Activated CD8-positive, alpha-beta T cell treated with anti-CD3 and anti-CD28 coated beads, Interleukin-2, amount 10 ng/mL, durations not matched to agents 7 days and 5 days (primary cell): ENCODE measurements at regions of chr13 and their contacts with region 1.

Region 1: DNA sequence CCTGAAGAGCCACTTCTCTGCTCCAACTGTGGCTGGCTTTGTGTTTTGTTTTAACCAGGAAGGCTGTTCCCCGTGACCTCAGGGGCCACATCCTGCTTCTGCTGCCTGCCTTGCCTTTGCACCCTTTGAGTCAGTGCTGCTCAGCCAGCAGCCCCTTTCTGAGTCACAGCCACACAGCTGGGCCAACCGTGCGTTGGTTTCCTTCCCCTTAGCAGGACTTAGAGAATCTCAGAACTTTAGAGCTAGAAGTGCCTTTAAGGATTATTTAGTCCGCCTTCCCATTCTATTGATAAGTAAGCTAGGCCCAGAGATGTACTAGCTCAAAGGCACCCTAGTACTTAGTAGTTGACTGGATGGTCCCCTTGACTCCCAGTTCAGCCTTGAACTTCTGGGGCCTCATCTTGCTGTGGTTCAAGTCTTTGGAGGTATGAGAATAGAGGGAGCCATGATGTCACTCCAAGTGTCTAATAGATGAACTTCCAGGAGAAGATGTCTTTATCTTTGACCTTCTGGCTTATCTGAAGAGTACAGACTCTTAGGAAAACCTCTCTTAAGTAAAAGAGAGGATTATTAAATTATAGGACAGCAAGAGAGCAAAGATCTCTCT is 8.0 kb downstream of the RGCC start:
- DNase-seq: peak; percentile 95
- ATAC-seq: peak; percentile 77
- H3K4me3 Mint-ChIP-seq: peak overlapping the region; percentile 70
- H3K27ac Mint-ChIP-seq: peak overlapping the region; percentile 94
- H3K4me1 Mint-ChIP-seq: peaks cover 79% of the 10 kb centered on the region
- H3K27me3 Mint-ChIP-seq: no peaks in the 10 kb centered on the region

Region 2: DNA sequence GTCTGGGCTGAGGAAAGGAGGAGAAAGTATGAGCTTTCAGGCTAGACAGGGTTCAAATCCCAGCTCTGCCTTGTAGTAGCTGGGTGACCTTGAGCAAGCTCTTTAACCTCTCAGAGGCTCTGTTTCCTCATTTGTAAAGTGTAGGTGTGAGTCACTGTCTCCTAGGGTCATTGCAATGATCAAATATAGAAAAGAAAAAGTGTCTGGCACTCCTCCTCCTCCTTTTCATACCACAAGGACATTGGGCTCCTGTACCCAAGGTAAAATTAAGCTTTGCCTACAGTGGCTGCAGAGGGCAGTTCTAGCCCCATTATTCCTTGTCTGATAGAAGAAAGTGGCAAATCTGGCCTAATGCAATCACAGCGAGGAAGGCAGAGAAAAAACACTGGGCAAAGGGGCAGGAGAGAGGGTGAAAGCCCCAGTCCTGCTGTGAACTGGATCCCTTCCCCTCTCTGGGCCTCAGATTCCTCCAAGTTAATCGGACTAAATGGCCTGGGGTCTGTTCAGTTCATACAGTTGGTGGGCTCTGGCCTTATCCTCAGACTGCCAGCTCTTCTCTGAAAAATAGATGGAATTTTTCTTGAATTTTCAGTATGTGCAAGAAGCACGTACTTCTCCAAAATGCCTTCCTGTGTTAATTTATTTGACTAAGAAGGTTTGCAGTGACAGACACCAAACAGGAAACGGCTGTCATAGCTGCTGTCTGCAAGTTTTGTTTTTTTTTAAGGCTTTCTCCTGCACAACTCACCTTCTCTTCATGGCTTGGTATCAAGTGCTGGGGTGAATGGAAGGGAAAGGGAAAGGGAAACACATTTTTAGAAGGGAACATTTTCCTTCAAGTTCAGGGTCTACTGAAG is 27.3 kb after region 1 on chr13:
- CTCF ChIA-PET with region 1: interaction called, 59 read pairs
- POLR2A ChIA-PET with region 1: interaction called, 21 read pairs
- DNase-seq: peak; percentile 44
- ATAC-seq: peak; percentile 74
- H3K4me3 Mint-ChIP-seq: peak overlapping the region; percentile 34
- H3K27ac Mint-ChIP-seq: peak overlapping the region; percentile 96
- H3K4me1 Mint-ChIP-seq: peaks cover 60% of the 10 kb centered on the region
- H3K27me3 Mint-ChIP-seq: no peaks in the 10 kb centered on the region